Body of pancreas (tissue), 4 donors: ENCODE measurements at regions of chrX and their contacts with region 1.

Region 1: GRCh38 chrX:57821703-57822375 is 88.4 kb downstream of the ZXDA start:
- DNase-seq: peak; percentile 24 to 46 (median 28)
- ATAC-seq: peak; percentile 79
- H3K4me3 ChIP-seq: no peak overlapping the region
- H3K27ac ChIP-seq: no peak overlapping the region
- H3K4me1 ChIP-seq: no peaks in the 10 kb centered on the region
- H3K27me3 ChIP-seq: no peaks in the 10 kb centered on the region
- CTCF ChIP-seq: peak; percentile 36 to 87 (median 75)
- POLR2A ChIP-seq: no peak

Region 2: DNA sequence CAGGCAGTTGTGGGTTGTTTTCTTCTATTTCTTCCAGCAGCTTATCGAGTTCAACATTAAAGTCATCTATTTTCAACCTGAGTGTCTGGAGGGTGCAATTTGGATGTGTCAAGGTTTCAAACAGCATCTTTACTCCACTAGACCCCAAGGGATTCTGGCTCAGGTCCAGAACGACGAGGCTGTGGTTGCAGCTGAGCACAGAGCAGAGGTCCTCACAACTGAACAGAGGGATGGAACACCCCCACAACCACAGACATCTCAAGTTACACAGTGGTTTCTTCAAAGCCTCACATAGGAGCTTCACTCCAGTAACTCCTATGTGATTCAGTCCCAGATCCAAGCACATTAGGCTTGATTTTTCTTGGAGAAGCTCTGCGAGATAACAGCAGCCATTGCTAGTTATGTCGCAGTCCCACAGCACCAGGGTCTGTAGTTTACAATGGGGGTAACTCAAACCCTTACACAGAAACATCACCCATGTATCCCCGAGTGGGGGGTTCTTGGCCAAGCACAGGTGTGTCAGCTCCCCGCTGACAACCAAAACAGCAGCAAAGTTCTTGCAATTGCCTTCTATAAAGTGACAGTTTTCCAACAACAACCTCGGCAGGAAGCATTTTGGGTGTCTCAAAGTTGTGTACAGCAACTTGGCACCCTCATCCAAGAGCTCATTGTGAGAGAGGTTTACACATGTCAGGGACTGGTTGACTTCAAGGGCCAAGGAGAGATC is 144.5 kb before region 1 on chrX:
- intact Hi-C with region 1: no loop called
- DNase-seq: no peak
- ATAC-seq: no peak
- H3K4me3 ChIP-seq: no peak overlapping the region
- H3K27ac ChIP-seq: no peak overlapping the region
- H3K4me1 ChIP-seq: no peaks in the 10 kb centered on the region
- H3K27me3 ChIP-seq: no peaks in the 10 kb centered on the region
- CTCF ChIP-seq: no peak
- POLR2A ChIP-seq: no peak

Region 3: GRCh38 chrX:57918750-57919436 is 97.1 kb after region 1 on chrX:
- intact Hi-C with region 1: loop called (anchors 5 kb)
- DNase-seq: peak; percentile 51 to 75 (median 62)
- ATAC-seq: peak; percentile 71
- H3K4me3 ChIP-seq: no peak overlapping the region
- H3K27ac ChIP-seq: no peak overlapping the region
- H3K4me1 ChIP-seq: no peaks in the 10 kb centered on the region
- H3K27me3 ChIP-seq: no peaks in the 10 kb centered on the region
- CTCF ChIP-seq: peak in 6 of 7 experiments; percentile 32 to 54 (median 48)
- POLR2A ChIP-seq: peak in 1 of 3 donors; percentile 13